WTC11 (cell line): ENCODE measurements at regions of chr12 and their contacts with region 1.

Region 1: DNA sequence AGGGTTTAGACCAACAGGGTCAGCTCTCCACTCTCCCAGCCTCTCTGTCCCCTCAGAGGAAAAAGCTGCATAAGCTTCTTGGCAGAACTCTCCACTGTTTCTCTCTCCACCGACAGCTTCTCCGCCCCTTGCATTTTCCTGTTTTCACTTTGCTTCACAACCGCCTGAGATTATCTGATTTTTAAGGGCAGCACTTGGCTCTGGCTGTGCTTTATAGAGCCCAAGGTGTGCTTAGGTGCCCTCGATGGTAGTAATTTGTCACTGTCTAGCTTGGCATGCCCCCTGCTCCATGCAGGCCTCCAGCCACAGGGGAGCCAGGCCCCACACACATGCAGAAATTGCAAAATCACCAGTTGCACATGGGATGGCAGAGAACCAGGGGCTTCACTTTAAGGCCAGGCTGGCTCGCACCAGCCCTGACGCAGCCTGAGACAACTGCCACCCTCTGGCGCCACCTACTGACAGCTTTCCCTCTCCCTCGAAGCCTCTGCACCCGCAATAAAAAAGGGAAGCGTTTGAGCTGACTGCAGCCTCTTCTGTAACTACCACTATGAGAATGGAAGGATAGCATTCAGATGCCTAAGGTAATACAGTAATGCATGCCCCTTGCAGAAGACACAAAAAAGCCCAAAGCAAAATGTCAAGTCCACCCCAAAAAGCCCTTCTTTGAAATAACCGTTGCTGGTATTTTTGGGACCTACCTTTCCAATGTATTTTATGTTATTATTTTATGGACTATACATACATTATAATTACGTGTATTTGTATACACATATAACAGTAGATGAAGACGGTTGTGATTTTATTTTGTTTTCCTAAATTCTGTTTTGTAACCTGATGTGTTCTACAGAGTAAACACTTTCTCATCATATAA is 32.0 kb upstream of the RIMBP2 start:
- DNase-seq: peak; percentile 90
- ATAC-seq: peak; percentile 94
- H3K4me3 Mint-ChIP-seq: no peak overlapping the region
- H3K27ac Mint-ChIP-seq: 0 out of 2 replicates have a peak overlapping the region, but pooled peaks have one; percentile 1
- H3K4me1 Mint-ChIP-seq: peaks cover 4% of the 10 kb centered on the region
- H3K27me3 Mint-ChIP-seq: no peaks in the 10 kb centered on the region; the same call in none of the 2 replicates
- CTCF ChIP-seq: peak; percentile 81

Region 2: DNA sequence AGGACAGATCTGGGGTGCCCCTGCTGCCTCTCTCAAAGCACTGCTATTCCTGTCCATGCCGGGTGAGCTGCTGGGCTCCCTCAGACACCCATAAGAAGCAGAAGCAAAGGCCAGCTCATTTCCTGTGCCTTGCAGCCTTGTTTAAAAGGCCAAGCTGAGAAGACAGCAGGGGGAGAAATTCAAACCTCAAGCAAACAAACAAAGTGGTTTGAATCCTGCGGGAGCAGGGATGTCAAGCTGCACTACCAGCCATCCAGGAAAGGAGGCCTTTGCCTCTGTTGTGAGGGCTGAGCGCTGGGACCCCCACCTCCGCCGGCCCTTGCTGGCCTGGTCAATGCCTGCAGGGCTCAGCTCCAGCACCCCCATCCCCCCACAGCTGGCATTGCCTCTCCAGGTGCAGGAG is 234.0 kb before region 1 on chr12:
- CTCF ChIA-PET with region 1: interaction called, 17 read pairs
- POLR2A ChIA-PET with region 1: no interaction called
- DNase-seq: peak; percentile 52
- ATAC-seq: peak; percentile 96
- H3K4me3 Mint-ChIP-seq: no peak overlapping the region; the same call in 1 of the 2 replicates
- H3K27ac Mint-ChIP-seq: peak overlapping the region; percentile 80
- H3K4me1 Mint-ChIP-seq: peaks cover 19% of the 10 kb centered on the region
- H3K27me3 Mint-ChIP-seq: no peaks in the 10 kb centered on the region
- CTCF ChIP-seq: no peak

Region 3: DNA sequence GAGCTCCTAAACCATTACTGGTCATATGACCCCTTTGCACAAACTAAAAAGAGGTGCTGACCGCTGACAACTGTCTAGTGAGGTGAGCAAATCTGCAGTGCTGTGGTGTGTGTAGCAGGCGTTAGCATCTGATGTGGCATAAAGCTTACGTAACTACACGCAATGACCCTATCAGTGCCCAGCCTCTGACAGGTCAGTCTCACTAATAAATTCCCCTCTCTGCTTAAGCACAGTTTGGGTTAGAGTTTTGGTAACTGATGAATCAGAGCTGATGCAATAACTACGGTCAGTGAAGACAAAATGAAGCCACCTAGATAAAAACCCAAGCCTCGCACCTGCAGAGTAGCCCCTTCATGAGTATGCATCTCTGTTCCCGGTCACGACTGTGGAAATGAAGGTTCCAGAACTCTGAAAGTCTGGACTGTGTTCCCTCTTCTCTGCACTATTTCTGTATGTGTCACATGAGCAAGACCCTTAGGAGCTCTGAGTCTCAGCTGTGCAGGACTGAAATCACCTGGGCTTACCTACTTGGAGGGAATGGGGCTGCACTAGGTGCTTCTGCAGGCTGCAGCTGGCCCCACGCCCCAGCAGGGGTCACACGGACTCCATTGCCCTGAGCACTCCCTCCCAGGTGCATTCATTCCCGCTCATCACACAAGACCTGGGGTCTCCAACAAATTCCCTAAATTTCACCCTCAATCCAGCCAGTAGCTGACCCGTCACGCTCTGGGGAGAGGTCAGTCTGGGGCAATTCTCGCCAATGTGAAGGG is 86.4 kb before region 1 on chr12:
- CTCF ChIA-PET with region 1: interaction called, 15 read pairs
- POLR2A ChIA-PET with region 1: no interaction called
- DNase-seq: no peak
- ATAC-seq: no peak
- H3K4me3 Mint-ChIP-seq: no peak overlapping the region
- H3K27ac Mint-ChIP-seq: no peak overlapping the region
- H3K4me1 Mint-ChIP-seq: peaks cover 5% of the 10 kb centered on the region; the same call in 1 of the 2 replicates
- H3K27me3 Mint-ChIP-seq: no peaks in the 10 kb centered on the region; the same call in 1 of the 2 replicates
- CTCF ChIP-seq: no peak

Region 4: DNA sequence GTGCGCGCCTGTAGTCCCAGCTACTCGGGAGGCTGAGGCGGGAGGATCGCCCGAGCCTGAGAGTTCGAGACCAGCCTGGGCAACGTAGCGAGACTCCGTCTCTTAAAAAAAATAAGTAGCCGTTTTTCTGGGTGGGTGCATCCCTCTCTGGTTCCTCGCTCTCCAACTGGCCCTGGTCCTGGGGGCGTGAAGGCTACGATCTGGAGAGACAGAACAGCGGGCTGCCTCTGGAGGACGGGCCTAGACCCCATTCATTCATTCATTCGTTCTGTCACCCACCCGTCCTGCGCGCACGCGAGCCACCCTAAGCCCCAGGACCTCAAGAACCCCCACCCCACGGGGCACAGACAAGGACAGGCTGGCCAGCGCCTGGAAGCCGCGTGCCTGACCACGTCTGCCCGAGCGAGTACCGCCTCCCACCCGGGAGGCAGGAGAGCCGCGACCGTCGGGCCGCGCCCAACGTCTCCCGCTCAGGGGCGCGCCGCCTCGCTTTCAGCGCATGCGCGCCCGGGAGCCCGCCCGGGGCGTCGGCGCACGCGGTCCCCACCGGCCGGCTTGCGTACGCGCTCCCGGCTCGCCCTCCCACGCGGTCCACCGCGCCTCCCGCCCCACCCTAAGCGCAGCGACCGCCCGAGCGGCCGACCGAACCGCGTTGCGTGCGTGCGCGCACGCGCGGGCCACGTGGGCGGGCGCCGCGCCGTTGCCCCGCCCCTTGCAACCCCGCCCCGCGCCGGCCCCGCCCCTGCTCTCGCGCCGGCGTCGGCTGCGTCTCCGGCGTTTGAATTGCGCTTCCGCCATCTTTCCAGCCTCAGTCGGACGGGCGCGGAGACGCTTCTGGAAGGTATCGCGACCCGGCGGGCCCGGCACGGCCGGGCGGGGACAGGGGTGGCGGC is 123.4 kb after region 1 on chr12 and contains the start of gene RAN:
- CTCF ChIA-PET with region 1: no interaction called
- POLR2A ChIA-PET with region 1: no interaction called
- DNase-seq: peak; percentile 80
- ATAC-seq: peak; percentile 71
- H3K4me3 Mint-ChIP-seq: peak within 1 kb of the TSS; percentile 97
- H3K27ac Mint-ChIP-seq: peak within 1 kb of the TSS; percentile 99
- H3K4me1 Mint-ChIP-seq: peaks cover 51% of the 10 kb centered on the region
- H3K27me3 Mint-ChIP-seq: no peaks in the 10 kb centered on the region; the same call in 1 of the 2 replicates
- CTCF ChIP-seq: no peak
- total RNA-seq, gene RAN: 1,744 to 1,783 TPM (median 1,745 TPM) in 3 replicates